Uterus (tissue), 4 donors: ENCODE measurements at regions of chr3 and their contacts with region 1.

Region 1: DNA sequence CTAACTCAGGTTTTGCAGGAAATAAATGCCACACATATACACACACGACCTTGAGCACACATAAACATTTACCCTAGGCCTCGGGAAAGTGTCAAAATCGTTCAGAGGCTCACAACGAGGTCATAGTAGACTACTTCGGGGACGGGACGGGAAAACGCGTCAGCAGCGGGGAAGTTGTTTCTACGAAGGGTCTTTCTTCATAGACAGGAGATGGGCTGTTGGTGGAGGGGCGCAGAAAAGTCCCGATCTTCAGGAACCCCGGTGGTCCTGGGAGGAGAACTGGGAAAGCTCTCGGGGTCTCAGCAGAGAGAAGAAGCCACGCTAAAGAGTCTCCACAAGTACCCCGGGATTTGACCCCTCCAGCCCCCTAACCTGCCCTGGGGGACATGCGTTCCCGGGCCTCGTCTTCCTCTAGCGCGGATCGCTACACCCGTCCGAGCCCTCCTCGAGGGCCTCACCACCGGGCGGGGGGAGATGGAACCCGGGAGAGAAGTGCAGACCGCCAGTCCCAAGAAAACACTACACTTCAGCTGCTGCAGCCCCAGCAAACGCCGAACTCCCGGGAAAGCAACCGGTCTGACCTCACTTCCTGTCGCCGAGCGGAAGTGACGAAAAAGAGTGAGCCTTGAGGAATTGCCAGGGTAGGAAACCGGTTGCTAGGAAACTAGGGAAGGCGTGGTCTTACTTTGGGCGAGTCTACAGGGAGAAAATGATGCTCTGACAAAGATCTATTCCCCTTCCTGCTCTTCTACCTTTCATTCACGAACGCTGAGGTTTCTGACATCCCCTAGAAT is at the start of gene PIK3R4:
- DNase-seq: peak; percentile 94 to 96
- H3K4me3 ChIP-seq: peak within 1 kb of the TSS; percentile 70 to 99
- H3K27ac ChIP-seq: peak within 1 kb of the TSS; percentile 86 to 93
- H3K4me1 ChIP-seq: peaks cover 0 to 8% of the 10 kb centered on the region in 2 donors
- H3K27me3 ChIP-seq: no peaks in the 10 kb centered on the region
- CTCF ChIP-seq: no peak
- POLR2A ChIP-seq: peak; percentile 46 to 68
- total RNA-seq, gene PIK3R4: 19.2 to 61.2 (median 41.0) TPM

Region 2: DNA sequence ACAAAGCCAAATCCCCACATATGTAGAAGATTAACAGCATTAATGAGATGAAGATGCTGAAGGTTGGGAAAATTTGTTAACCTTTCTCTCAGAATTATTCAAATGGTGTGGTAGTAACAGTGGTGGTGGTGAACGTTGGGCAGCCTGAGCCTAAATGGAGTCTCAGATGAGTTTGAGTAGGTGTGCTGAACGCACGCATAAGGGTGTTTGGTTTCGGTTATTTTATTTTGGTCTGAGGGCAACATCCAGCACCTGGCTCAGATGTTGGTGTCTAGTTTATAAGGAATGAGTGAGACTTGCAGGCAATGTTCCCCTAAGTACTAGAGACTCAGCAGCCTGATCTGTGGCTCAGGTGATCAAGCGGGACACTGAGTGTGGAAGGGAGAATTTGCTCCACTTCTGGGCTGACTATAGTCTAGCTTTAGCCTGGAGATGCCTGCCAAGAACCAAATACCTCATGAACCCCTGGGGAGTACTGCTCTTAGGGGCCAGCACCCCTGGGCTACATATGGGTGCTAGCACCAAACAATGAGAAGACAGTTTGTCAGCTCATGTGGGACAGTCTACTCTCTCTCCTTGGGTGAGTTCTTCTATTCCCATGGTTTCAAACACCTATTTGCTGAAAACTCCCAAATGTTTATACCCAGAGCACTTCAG is 107.9 kb after region 1 on chr3:
- intact Hi-C with region 1: no loop called
- DNase-seq: no peak
- H3K4me3 ChIP-seq: no peak overlapping the region
- H3K27ac ChIP-seq: no peak overlapping the region
- H3K4me1 ChIP-seq: no peaks in the 10 kb centered on the region
- H3K27me3 ChIP-seq: no peaks in the 10 kb centered on the region
- CTCF ChIP-seq: no peak
- POLR2A ChIP-seq: no peak

Region 3: DNA sequence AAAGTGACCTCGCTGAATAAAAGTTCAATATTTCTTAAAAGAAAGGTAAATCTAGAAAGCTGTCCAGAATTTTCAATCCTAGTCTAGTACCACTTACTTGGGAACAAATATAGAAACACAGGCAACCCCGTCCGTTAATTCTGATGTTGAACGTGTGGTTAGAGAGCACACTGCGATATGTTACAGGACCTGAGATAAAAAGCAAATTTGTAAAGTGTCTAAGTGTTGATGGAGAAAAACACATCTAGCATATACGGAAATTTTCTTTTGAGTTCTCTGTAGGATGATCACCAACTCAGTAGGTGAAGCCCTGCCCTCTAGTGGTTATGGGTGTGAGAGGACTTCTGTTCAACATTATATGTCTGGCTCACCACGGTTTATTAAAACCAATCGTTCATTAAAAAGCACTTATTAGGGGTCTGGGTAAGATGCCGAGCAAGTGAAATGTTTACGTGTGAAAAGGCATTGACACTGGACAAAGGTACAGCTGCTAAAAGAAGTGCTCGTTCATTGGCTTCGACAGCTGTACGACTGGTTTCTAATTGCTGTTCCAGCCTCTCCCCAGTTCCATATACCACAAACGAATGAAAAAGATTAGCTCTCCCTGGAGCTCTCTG is 146.4 kb after region 1 on chr3:
- intact Hi-C with region 1: loop called (anchors 10 kb)
- DNase-seq: peak; percentile 49 to 77
- H3K4me3 ChIP-seq: peak overlapping the region; percentile 62 to 76
- H3K27ac ChIP-seq: peak overlapping the region; percentile 90 to 93
- H3K4me1 ChIP-seq: peaks cover 0 to 6% of the 10 kb centered on the region in 2 donors
- H3K27me3 ChIP-seq: no peaks in the 10 kb centered on the region
- CTCF ChIP-seq: peak; percentile 76 to 81 (median 79)
- POLR2A ChIP-seq: no peak